Left cardiac atrium (tissue), 4 donors: ENCODE measurements at regions of chr12 and their contacts with region 1.

Region 1: DNA sequence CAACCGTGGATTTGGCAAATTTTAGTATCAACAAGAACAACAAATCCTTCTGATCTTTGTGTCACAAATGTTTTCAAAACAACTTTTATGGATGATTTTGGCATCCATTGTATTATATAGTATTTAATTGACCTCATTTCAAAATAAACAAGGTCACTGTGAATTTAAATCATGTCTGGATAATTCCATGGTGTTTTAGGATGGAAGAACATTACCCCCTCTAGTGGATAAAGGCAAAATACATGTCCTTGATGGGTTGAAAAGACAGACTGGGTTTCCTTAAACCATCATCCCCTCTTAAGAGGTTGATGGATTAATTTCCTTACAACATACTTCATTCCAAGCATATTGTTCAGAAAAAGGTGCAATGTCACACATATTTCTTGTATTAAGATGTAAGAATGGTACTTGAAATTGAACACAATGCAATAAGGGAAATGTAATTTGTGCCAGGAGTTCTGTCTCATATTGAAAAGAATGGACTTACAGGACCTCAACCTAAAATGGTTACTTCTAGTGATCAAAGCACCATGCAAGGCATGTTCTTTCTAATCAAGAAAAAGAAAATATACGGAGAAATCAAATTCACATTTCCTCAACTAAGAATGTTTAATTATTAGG is 352.0 kb downstream of the BCAT1 start:
- DNase-seq: no peak
- ATAC-seq: peak in 1 of 2 donors; percentile 34

Region 2: GRCh38 chr12:24109381-24110039 is 487.4 kb before region 1 on chr12:
- intact Hi-C with region 1: loop called in 1 of 2 experiments (anchors 5 kb)
- DNase-seq: no peak
- ATAC-seq: no peak

Region 3: GRCh38 chr12:24360907-24361306 is 236.0 kb before region 1 on chr12:
- intact Hi-C with region 1: loop called in 1 of 2 experiments (anchors 10 kb)
- DNase-seq: no peak
- ATAC-seq: no peak

Region 4: DNA sequence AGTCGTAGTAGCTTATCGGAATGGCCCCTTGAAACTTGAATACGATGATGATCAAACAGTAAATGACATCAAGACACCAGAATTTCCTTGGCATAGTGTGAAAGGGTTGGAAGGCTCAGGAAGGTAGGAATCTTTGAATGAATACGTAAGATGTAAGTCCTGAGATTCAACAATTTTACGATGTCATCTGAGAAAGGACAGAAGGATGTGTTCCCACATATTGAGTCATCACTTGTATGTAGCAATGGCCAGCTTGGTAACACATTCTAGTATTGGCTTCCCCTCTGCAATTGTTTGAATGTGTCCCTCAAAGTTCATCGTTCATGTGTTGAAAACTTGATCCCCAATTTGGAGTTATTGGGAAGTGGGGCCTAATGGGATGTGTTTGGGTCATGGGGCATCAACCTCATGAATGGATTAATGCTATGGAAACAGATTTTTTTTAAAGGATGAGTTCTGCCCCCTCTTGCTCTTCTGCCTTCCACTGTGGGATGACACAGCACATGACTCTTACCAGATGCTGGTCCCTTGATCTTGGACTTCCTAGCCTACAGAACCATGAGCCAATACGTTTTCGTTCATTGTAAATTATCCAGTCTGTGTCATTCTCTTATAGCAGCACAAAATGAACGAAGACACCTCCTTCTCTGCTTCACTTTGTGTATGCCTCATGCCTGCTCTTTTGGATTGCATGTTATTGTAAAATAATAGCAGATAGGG is 67.4 kb after region 1 on chr12:
- intact Hi-C with region 1: no loop called
- DNase-seq: no peak
- ATAC-seq: no peak